H1 (cell line): ENCODE measurements at regions of chr16 and their contacts with region 1.

Region 1: GRCh38 chr16:74862741-74863244 is 88.2 kb upstream of the FA2H start:
- DNase-seq: no peak
- H3K4me3 ChIP-seq: no peak overlapping the region
- H3K27ac ChIP-seq: no peak overlapping the region
- H3K4me1 ChIP-seq: peaks cover 6 to 17% (median 10%) of the 10 kb centered on the region in 4 experiments; a peak in 5 of 7 replicates
- H3K27me3 ChIP-seq: no peaks in the 10 kb centered on the region
- CTCF ChIP-seq: peak in 2 of 3 experiments; percentile 67 to 79; a peak in 3 of 4 replicates
- EP300 ChIP-seq: no peak
- POLR2A ChIP-seq: no peak
- RAD21 ChIP-seq: peak; percentile 90 to 91

Region 2: GRCh38 chr16:74709441-74709877 is 153.3 kb before region 1 on chr16:
- CTCF ChIA-PET with region 1: interaction called, 104 read pairs
- POLR2A ChIA-PET with region 1: no interaction called
- DNase-seq: peak; percentile 63 to 91
- H3K4me3 ChIP-seq: no peak overlapping the region
- H3K27ac ChIP-seq: no peak overlapping the region
- H3K4me1 ChIP-seq: no peaks in the 10 kb centered on the region
- H3K27me3 ChIP-seq: peaks cover 0 to 2% (median 0%) of the 10 kb centered on the region in 4 experiments; a peak in 2 of 7 replicates
- CTCF ChIP-seq: peak; percentile 92 to 98 (median 95)
- EP300 ChIP-seq: no peak
- POLR2A ChIP-seq: no peak
- RAD21 ChIP-seq: peak; percentile 96

Region 3: GRCh38 chr16:74734361-74735161 is 128.2 kb before region 1 on chr16:
- CTCF ChIA-PET with region 1: interaction called, 26 read pairs
- POLR2A ChIA-PET with region 1: no interaction called
- DNase-seq: peak; percentile 59 to 74
- H3K4me3 ChIP-seq: peak overlapping the region in 3 of 4 experiments; percentile 8 to 29 (median 11); a peak in 3 of 8 replicates
- H3K27ac ChIP-seq: no peak overlapping the region
- H3K4me1 ChIP-seq: peaks cover 2 to 37% (median 28%) of the 10 kb centered on the region in 4 experiments
- H3K27me3 ChIP-seq: 0 out of 7 replicates have a peak, but pooled peaks cover 0 to 2% (median 0%) of the 10 kb centered on the region in 4 experiments
- CTCF ChIP-seq: no peak
- EP300 ChIP-seq: no peak
- POLR2A ChIP-seq: no peak
- RAD21 ChIP-seq: no peak

Region 4: DNA sequence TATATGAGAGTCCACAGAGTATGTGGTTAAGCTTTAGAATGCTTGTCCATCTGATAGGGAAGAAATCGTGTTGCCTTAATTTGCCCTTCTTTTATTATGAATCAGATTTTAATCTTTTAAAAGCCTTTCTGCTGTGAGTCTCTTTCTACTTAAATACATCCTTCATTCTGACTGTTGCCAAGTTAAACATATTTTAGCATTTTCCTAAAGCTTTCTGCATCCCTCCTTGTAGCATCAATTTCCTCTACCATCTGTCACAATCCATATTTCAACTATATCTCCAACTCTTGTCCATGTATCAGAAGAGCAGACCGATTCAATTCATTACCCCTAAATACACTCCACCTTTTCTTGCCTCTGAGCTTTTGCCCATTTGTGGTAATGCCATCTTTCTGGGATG is 67.7 kb before region 1 on chr16:
- CTCF ChIA-PET with region 1: interaction called, 16 read pairs
- POLR2A ChIA-PET with region 1: no interaction called
- DNase-seq: no peak
- H3K4me3 ChIP-seq: no peak overlapping the region
- H3K27ac ChIP-seq: no peak overlapping the region
- H3K4me1 ChIP-seq: no peaks in the 10 kb centered on the region
- H3K27me3 ChIP-seq: no peaks in the 10 kb centered on the region
- CTCF ChIP-seq: no peak
- EP300 ChIP-seq: no peak
- POLR2A ChIP-seq: no peak
- RAD21 ChIP-seq: no peak

Region 5: GRCh38 chr16:74846714-74847113 is 16.1 kb before region 1 on chr16:
- CTCF ChIA-PET with region 1: interaction called, 36 read pairs
- POLR2A ChIA-PET with region 1: no interaction called
- DNase-seq: no peak
- H3K4me3 ChIP-seq: no peak overlapping the region
- H3K27ac ChIP-seq: no peak overlapping the region
- H3K4me1 ChIP-seq: no peaks in the 10 kb centered on the region
- H3K27me3 ChIP-seq: no peaks in the 10 kb centered on the region
- CTCF ChIP-seq: no peak
- EP300 ChIP-seq: no peak
- POLR2A ChIP-seq: no peak
- RAD21 ChIP-seq: no peak

Region 6: DNA sequence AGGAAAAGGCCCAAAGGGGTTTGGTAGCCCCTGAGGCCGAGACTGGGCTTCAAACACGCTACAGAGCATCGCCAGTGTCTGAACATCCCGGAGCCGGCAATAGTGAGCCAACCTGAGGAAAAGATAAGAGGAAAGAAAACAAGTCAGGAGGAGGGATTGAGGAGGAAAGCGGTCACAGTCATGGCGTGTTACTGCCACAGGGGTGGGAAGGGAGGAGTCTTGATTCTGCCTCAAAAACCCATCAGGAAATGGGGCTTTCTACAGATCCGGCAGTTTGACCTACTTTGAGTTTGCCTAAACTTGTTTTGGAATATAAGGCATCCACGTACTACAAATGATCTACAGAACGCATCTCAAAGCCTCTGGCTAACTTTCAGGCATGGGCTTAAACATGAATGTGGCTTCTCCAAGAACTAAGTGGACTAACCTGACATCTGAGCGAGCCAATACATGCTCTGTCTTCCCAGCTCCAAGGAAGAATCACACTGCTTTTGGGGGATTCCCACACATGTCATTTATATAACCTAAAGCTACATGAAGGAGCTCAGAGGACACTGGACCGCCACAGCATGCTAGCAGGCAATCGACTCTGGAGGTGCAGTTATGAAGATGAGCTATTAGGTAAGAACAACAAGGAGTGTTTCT is 25.5 kb after region 1 on chr16:
- CTCF ChIA-PET with region 1: interaction called, 14 read pairs
- POLR2A ChIA-PET with region 1: no interaction called
- DNase-seq: no peak
- H3K4me3 ChIP-seq: no peak overlapping the region
- H3K27ac ChIP-seq: no peak overlapping the region
- H3K4me1 ChIP-seq: no peaks in the 10 kb centered on the region
- H3K27me3 ChIP-seq: no peaks in the 10 kb centered on the region
- CTCF ChIP-seq: no peak
- EP300 ChIP-seq: no peak
- POLR2A ChIP-seq: no peak
- RAD21 ChIP-seq: no peak